Colonic mucosa (tissue), 4 donors: ENCODE measurements at regions of chr4 and their contacts with region 1.

Region 1: GRCh38 chr4:73922766-73923630 is 53.8 kb downstream of the CXCL1 start:
- DNase-seq: no peak
- H3K4me3 ChIP-seq: no peak overlapping the region
- H3K27ac ChIP-seq: no peak overlapping the region
- H3K4me1 ChIP-seq: peaks cover 4% of the 10 kb centered on the region
- H3K27me3 ChIP-seq: no peaks in the 10 kb centered on the region
- CTCF ChIP-seq: no peak

Region 2: DNA sequence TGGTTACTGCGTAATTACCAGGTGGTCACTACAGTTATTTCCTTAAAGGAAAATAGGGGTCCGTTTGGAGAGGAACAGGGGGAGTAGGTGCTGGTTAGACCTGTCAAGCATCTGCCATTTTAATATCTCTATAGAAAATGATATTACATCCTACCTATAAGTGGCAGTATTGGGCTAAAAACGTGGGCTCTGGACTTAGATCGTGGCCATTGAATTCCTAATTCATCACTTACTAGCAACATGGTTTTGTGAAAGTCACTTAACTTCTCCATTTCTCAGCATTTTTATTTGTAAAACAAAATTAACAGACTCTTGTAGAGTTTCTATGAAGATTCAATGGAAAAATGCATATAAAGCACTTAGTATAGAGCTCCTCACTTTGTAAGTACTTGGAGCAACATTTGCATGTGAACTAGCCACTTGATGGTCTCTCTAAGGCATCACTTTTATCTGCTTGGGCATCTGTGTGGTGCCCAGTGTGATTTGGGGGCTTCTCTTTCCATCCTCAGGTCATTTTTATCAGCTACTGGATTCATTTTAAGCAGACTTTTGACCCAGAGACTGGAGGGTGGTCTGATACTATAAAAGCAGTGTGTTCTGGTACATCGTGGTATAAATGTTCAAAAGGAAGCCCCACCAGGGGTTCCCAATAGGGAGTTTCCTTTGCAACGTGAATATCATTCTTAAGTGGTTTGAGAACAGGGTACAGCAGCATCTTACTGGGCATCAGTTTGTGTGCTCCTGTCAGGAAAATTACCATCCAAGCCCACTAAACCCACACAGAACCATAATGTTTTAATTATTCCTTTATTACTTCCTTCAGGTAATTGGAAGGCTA is 260.1 kb before region 1 on chr4:
- intact Hi-C with region 1: loop called (anchors 10 kb)
- DNase-seq: no peak
- H3K4me3 ChIP-seq: no peak overlapping the region
- H3K27ac ChIP-seq: no peak overlapping the region
- H3K4me1 ChIP-seq: no peaks in the 10 kb centered on the region
- H3K27me3 ChIP-seq: no peaks in the 10 kb centered on the region
- CTCF ChIP-seq: peak; percentile 35